Mammary epithelial cell (primary cell): ENCODE measurements at regions of chr10 and their contacts with region 1.

Region 1: GRCh38 chr10:43026011-43026973 is 50.6 kb upstream of the RET start:
- DNase-seq: peak; percentile 98
- H3K4me3 ChIP-seq: peak overlapping the region in 1 of 3 experiments; percentile 26
- H3K27ac ChIP-seq: peak overlapping the region; percentile 40
- H3K4me1 ChIP-seq: peaks cover 19% of the 10 kb centered on the region
- H3K27me3 ChIP-seq: no peaks in the 10 kb centered on the region
- CTCF ChIP-seq: no peak

Region 2: GRCh38 chr10:42782446-42783180 is 243.7 kb before region 1 on chr10 and contains the start of gene BMS1:
- CTCF ChIA-PET with region 1: no interaction called
- dilution Hi-C with region 1: no loop called
- in situ Hi-C with region 1: no loop called
- intact Hi-C with region 1: loop called (anchors 1 kb)
- DNase-seq: peak; percentile 94
- H3K4me3 ChIP-seq: peak within 1 kb of the TSS; percentile 55 to 84 (median 80)
- H3K27ac ChIP-seq: peak within 1 kb of the TSS; percentile 84
- H3K4me1 ChIP-seq: peaks cover 4% of the 10 kb centered on the region
- H3K27me3 ChIP-seq: no peaks in the 10 kb centered on the region
- CTCF ChIP-seq: no peak
- total RNA-seq, gene BMS1: 14.3 to 23.5 TPM

Region 3: DNA sequence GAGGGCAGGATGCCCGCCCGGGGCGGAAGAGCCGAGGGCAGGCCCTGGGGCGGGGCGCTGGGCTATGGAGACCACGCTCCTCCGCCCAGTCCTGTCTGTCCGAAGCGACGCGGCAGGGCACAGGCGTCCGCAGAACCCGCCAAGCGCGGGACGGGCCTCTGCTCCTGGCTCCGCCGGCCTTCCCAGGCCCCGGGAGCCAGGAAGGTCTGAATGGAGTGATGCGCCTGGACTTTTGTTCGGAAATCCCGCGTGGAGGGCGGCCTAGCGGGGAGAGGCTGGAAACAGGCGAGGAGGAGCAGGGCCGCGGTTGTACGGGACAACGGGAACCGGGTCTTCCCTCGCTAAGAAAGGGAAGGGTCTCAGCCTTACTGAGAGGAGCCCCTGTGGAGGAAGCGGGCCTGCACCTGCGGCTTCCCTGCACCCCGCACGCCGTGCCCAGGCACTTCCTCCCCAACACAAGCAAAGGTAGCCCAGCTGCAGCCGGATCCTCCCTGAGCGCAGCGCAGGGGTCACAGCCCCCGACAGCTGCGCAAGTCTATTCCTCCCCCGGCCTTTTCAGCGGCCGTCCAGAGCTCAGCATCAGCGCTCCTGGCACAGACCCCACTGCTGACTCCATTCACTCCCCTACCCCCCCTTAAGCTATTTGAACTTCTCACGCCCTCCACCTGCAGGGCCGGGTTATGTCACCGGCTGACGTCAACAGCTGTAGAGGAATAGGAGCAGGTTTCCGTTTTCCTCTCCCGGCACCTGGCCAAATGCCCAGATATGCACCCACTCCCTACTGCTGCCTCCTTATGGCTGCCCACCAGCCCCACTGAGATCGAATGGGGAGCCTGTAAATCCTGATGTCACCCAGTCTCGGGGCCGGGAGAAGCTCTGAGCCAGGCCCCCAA is 92.6 kb before region 1 on chr10:
- CTCF ChIA-PET with region 1: no interaction called
- dilution Hi-C with region 1: no loop called
- in situ Hi-C with region 1: loop called in 1 of 2 experiments (anchors 25 kb)
- intact Hi-C with region 1: no loop called
- DNase-seq: no peak
- H3K4me3 ChIP-seq: no peak overlapping the region
- H3K27ac ChIP-seq: no peak overlapping the region
- H3K4me1 ChIP-seq: peaks cover 6% of the 10 kb centered on the region
- H3K27me3 ChIP-seq: peaks cover 7% of the 10 kb centered on the region
- CTCF ChIP-seq: no peak

Region 4: DNA sequence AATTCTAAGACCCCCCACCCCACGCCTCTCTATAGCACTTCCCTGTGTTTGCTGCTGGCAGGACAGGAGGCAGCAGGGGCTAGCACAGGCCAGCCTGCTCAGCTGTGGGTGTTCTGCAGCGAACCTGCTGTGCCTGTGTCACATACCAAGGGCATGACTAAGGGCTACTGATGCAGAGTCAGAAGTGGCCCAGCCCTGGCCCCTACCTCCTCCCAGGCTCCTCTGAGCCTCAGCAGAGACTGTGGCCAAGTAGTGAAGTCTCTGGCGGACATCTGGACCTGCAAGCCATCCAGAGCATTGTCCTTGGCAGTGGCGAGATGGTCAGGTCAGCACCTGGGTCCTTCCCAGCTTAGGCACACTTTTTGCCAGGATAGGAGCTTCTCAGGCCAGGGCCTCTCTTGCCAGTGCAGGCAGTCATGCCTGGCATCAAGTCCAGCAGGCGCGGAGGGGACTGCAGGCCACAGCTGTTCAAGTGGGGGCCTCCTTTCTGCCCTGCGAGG is 65.8 kb before region 1 on chr10:
- CTCF ChIA-PET with region 1: no interaction called
- dilution Hi-C with region 1: no loop called
- in situ Hi-C with region 1: no loop called
- intact Hi-C with region 1: no loop called
- DNase-seq: peak; percentile 59
- H3K4me3 ChIP-seq: no peak overlapping the region
- H3K27ac ChIP-seq: no peak overlapping the region
- H3K4me1 ChIP-seq: peaks cover 16% of the 10 kb centered on the region
- H3K27me3 ChIP-seq: no peaks in the 10 kb centered on the region
- CTCF ChIP-seq: no peak

Region 5: DNA sequence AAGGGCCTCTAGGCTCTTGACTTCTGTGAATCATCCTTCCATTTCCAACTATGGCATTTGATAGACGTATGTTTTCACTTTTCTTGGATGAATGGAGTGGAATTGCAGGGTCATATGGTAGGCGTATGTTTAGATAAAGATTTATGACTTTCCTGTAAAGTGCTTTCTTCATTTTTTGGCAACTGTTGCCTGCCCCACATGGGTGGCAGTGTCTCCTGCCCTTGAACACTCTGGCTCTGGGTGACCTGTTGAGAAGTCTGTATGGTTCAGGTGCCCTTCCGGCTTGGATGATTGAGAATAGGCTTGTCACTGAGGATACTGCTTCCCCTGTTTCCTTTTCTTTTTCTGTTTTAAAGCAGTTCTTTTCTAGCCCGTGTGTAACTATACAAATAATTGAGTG is 73.6 kb after region 1 on chr10:
- CTCF ChIA-PET with region 1: no interaction called
- dilution Hi-C with region 1: loop called (anchors 5 kb)
- in situ Hi-C with region 1: no loop called
- intact Hi-C with region 1: no loop called
- DNase-seq: no peak
- H3K4me3 ChIP-seq: no peak overlapping the region
- H3K27ac ChIP-seq: no peak overlapping the region
- H3K4me1 ChIP-seq: peaks cover 4% of the 10 kb centered on the region
- H3K27me3 ChIP-seq: no peaks in the 10 kb centered on the region
- CTCF ChIP-seq: no peak